Pancreas (tissue), 10 donors: ENCODE measurements at regions of chr22 and their contacts with region 1.

Region 1: GRCh38 chr22:30289134-30289979 is at the start of gene CASTOR1:
- DNase-seq: peak; percentile 95 to 99 (median 98)
- ATAC-seq: peak; percentile 86 to 88 (median 86)
- H3K4me3 ChIP-seq: peak within 1 kb of the TSS; percentile 73 to 96 (median 84)
- H3K27ac ChIP-seq: peak within 1 kb of the TSS; percentile 68 to 80 (median 76)
- H3K4me1 ChIP-seq: peaks cover 10 to 23% (median 22%) of the 10 kb centered on the region in 3 donors
- H3K27me3 ChIP-seq: no peaks in the 10 kb centered on the region
- CTCF ChIP-seq: no peak
- total RNA-seq, gene CASTOR1: 1.8 to 7.3 (median 3.8) TPM

Region 2: GRCh38 chr22:29994027-29994715 is 295.2 kb before region 1 on chr22:
- intact Hi-C with region 1: no loop called
- DNase-seq: no peak
- ATAC-seq: peak in 3 of 4 donors; percentile 27 to 50 (median 46)
- H3K4me3 ChIP-seq: no peak overlapping the region
- H3K27ac ChIP-seq: peak overlapping the region in 2 of 4 donors; percentile 53 to 76
- H3K4me1 ChIP-seq: peaks cover 0 to 12% (median 11%) of the 10 kb centered on the region in 3 donors
- H3K27me3 ChIP-seq: no peaks in the 10 kb centered on the region
- CTCF ChIP-seq: no peak

Region 3: GRCh38 chr22:30381264-30381663 is 91.9 kb after region 1 on chr22:
- intact Hi-C with region 1: loop called in 2 of 3 experiments (anchors 5 kb)
- DNase-seq: no peak
- ATAC-seq: no peak
- H3K4me3 ChIP-seq: no peak overlapping the region
- H3K27ac ChIP-seq: no peak overlapping the region
- H3K4me1 ChIP-seq: peaks cover 0 to 4% (median 0%) of the 10 kb centered on the region in 3 donors
- H3K27me3 ChIP-seq: no peaks in the 10 kb centered on the region
- CTCF ChIP-seq: no peak